ENCODE measurements at regions of chr9 and their contacts with region 1.

Region 1: GRCh38 chr9:123282362-123283047 is 14.1 kb upstream of the STRBP start:
- DNase-seq: peak; percentile 80
- ATAC-seq: peak; percentile 92

Region 2: DNA sequence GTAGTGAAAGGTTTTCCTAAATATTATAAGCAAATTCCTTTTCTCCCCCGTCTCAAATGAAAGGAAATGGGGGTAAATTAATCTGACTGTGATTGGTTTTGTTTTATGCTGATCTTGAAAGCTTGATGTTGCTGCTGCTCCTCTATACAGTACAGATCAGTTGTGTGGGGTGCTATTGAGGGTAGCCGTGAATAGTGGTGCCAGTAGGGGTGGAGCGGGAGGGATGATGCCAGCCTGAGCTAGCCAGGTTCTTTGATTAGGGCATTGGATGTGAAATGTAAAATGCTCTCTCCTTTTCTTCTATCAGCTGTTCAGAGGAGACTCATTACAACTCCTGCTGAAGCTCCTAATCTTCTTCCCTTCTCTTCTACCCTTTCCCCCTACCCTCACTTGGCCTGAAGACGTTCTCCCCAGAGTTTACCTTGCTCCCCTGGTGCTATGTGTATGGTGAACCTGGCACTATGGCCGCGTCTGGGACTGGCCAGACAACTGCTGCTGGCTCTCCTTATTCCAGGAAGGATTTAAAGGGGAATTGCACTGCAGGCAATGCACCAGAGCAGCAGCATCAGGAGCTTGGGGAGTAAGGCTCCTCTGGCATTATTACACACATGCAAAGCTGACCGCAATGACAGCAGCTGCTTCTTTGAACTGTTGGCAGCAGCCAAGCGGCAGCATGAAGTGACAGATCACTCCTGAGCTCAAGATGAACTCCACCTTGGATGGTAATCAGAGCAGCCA is 248.5 kb before region 1 on chr9:
- intact Hi-C with region 1: no loop called
- DNase-seq: no peak
- ATAC-seq: peak; percentile 34

Region 3: GRCh38 chr9:123305879-123306278 is 23.4 kb after region 1 on chr9:
- intact Hi-C with region 1: loop called (anchors 2 kb)
- DNase-seq: no peak
- ATAC-seq: peak; percentile 70

Region 4: GRCh38 chr9:123322273-123323195 is 40.0 kb after region 1 on chr9:
- intact Hi-C with region 1: loop called (anchors 5 kb)
- DNase-seq: peak; percentile 35
- ATAC-seq: peak; percentile 62

Measured in Right ventricle myocardium inferior (tissue), 1 donor.